Dorsolateral prefrontal cortex (tissue), 120 donors: ENCODE measurements at regions of chr2 and their contacts with region 1.

Region 1: DNA sequence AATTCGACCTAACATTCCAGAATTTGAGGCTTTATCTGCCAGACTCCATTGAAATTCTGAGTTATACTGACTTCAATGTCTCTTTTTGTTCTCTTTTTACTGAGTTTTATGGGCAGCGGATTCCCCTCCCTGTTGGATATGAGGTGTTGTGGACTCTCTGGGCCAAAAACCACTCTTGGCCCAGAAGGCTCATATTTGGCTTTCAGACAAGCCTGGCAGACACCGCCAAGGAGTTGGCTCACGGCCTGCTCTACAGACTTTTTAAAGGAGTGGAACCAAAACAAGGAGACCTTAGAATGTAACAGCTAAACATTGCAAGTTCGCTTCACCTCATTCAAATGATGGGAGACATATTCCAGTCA is 206.4 kb upstream of the NCKAP5 start:
- DNase-seq: peak in 5 of 10 donors; percentile 28 to 58 (median 43)
- H3K4me3 ChIP-seq: peak overlapping the region in 1 of 59 donors; percentile 13
- H3K27ac ChIP-seq: peak overlapping the region in 47 of 59 donors; percentile 2 to 88 (median 63)
- H3K27me3 ChIP-seq: no peaks in the 10 kb centered on the region
- CTCF ChIP-seq: no peak

Region 2: GRCh38 chr2:133641497-133641896 is 133.1 kb before region 1 on chr2:
- intact Hi-C with region 1: loop called (anchors 2 to 5 kb)
- DNase-seq: peak in 9 of 10 donors; percentile 39 to 77 (median 74)
- H3K4me3 ChIP-seq: peak overlapping the region in 53 of 59 donors; percentile 3 to 65 (median 41)
- H3K27ac ChIP-seq: peak overlapping the region; percentile 61 to 96 (median 87)
- H3K27me3 ChIP-seq: no peaks in the 10 kb centered on the region
- CTCF ChIP-seq: peak in 45 of 56 donors; percentile 7 to 59 (median 34)

Region 3: GRCh38 chr2:133674433-133675331 is 100.0 kb before region 1 on chr2:
- intact Hi-C with region 1: loop called (anchors 5 to 10 kb)
- DNase-seq: peak; percentile 20 to 87 (median 76)
- H3K4me3 ChIP-seq: peak overlapping the region; percentile 12 to 68 (median 52)
- H3K27ac ChIP-seq: peak overlapping the region; percentile 67 to 94 (median 88)
- H3K27me3 ChIP-seq: no peaks in the 10 kb centered on the region
- CTCF ChIP-seq: peak in 2 of 56 donors; percentile 18

Region 4: DNA sequence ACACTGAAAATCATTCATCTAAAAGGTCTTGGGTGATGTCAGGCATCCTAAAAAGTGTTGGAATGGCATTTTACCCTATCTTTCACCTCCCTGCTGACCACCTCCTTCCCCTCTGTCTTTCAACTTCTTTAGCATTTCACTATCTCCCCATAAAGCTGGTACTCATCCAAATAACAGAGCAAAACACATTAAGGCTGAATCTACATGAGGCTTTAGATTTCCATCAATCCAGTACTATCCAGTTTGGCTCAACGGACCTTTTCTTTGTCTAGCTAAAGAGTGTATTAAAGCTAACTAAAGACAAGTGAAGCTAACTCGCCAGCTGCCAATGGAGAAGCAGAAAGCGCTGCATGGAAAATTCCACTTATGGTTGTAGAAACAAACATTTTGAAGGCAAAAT is 83.9 kb before region 1 on chr2:
- intact Hi-C with region 1: no loop called
- DNase-seq: no peak
- H3K4me3 ChIP-seq: no peak overlapping the region
- H3K27ac ChIP-seq: peak overlapping the region in 1 of 59 donors; percentile 34
- H3K27me3 ChIP-seq: peaks cover 0 to 3% (median 0%) of the 10 kb centered on the region in 45 donors
- CTCF ChIP-seq: no peak

Region 5: DNA sequence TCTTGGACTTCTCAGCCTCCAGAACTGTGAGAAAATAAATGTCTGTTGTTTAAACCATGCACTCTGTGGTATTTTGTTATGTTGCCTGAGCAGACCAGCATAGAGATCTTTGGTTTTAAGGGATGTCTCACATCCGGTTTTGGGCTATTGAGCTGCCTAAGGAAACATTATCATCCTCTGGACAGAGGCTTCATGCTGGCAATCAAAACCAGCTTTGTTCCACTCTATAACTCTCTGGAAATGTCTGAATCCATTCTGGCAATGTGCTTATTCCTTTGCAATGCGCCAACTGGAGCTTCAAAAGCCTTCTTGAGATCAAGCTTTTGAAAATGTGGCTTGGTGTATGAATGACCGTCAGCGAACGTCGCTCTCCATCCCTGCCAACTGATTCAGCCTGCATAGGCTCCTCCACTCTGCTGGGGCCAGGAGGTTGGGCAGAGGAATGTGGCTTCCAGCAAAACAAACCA is 295.7 kb after region 1 on chr2:
- intact Hi-C with region 1: no loop called
- DNase-seq: no peak
- H3K4me3 ChIP-seq: no peak overlapping the region
- H3K27ac ChIP-seq: no peak overlapping the region
- H3K27me3 ChIP-seq: no peaks in the 10 kb centered on the region
- CTCF ChIP-seq: no peak